ENCODE measurements at regions of chr11 and their contacts with region 1.

Region 1: GRCh38 chr11:86068951-86069407 is at the start of gene PICALM:
- DNase-seq: peak; percentile 85 to 98
- ATAC-seq: peak; percentile 85 to 91
- H3K4me3 ChIP-seq: peak within 1 kb of the TSS; percentile 81
- H3K27ac ChIP-seq: peak within 1 kb of the TSS; percentile 91 to 98
- H3K4me1 ChIP-seq: peaks cover 35% of the 10 kb centered on the region
- CTCF ChIP-seq: no peak
- EP300 ChIP-seq: no peak
- POLR2A ChIP-seq: peak; percentile 66
- RAD21 ChIP-seq: peak in 1 of 2 experiments; percentile 23; a peak in 1 of 5 replicates
- polyA plus RNA-seq, gene PICALM: 195 and 212 TPM in 2 replicates

Region 2: DNA sequence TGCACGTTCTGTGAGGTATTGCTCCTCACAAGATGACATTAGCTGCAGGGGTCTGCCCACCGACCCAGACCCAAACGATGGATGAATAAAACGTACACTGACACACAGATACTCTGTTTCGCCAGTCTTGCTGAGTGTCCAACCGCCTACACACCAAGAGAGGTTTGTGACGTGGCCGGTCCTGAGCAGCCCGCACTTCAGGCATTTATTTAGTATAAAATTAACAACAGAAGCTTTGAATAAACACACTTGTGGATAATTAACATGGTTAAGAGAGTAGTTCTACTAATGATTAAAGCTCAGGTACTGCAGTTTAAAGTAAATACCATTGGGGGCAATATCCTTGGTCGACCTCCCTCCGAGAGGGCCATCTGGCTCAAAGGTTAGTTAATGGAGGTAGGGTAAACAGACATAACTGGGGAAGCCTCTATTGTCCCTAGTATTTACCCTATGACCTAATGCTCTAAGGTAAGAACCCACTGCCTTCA is 138.1 kb before region 1 on chr11:
- CTCF ChIA-PET with region 1: no interaction called
- POLR2A ChIA-PET with region 1: no interaction called
- DNase-seq: no peak
- ATAC-seq: no peak
- H3K4me3 ChIP-seq: no peak overlapping the region
- H3K27ac ChIP-seq: no peak overlapping the region
- H3K4me1 ChIP-seq: no peaks in the 10 kb centered on the region
- CTCF ChIP-seq: no peak
- EP300 ChIP-seq: no peak
- POLR2A ChIP-seq: no peak
- RAD21 ChIP-seq: no peak

Region 3: GRCh38 chr11:86101941-86102407 is 33.0 kb after region 1 on chr11:
- CTCF ChIA-PET with region 1: no interaction called
- POLR2A ChIA-PET with region 1: interaction called, 16 read pairs
- DNase-seq: peak in 1 of 2 experiments; percentile 47
- ATAC-seq: peak; percentile 74 to 87
- H3K4me3 ChIP-seq: no peak overlapping the region
- H3K27ac ChIP-seq: peak overlapping the region in 1 of 2 experiments; percentile 34; a peak in 1 of 6 replicates
- H3K4me1 ChIP-seq: peaks cover 24% of the 10 kb centered on the region
- CTCF ChIP-seq: no peak
- EP300 ChIP-seq: no peak
- POLR2A ChIP-seq: no peak
- RAD21 ChIP-seq: no peak

Region 4: DNA sequence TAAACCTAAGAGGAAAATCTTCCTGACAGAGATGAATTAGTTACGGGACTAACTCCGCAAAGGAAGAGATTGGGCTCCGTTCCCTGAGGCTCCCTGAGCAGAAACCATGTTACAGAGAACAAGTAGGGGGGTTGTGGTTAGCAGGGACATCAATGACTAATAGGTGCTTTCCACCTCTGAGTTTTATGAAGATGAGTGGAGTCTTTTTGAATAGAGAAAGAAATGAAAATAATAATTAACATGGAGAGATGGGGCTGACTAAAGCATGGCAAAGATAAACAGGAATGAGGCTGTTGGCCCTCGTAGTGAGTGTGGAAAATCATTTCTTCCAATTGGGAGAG is 47.4 kb after region 1 on chr11:
- CTCF ChIA-PET with region 1: interaction called, 3 read pairs
- POLR2A ChIA-PET with region 1: interaction called, 14 read pairs
- DNase-seq: peak; percentile 52 to 69
- ATAC-seq: peak; percentile 79 to 89
- H3K4me3 ChIP-seq: 0 out of 3 replicates have a peak overlapping the region, but pooled peaks have one; percentile 2
- H3K27ac ChIP-seq: peak overlapping the region; percentile 58 to 85
- H3K4me1 ChIP-seq: peaks cover 37% of the 10 kb centered on the region
- CTCF ChIP-seq: no peak
- EP300 ChIP-seq: no peak
- POLR2A ChIP-seq: no peak
- RAD21 ChIP-seq: no peak

Region 5: DNA sequence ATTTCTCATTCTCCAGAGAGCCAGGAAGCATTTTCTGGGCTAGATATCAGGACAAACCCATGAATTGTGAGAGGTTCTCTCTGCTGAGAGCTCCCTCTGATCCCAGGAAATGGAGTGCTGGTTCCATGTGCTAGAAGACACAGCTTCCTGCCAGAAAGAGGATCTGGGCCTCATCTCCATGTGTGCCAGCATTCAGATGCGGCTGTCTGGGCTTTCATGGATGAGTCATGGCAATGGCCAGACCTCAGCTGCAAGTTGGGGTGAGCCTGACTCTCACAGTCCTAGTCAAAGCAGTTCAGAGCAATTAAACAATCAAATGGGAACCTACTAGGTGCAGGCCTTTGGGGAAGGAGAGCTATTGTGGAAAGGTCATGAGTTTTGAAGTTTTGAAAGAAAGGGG is 93.3 kb after region 1 on chr11:
- CTCF ChIA-PET with region 1: interaction called, 17 read pairs
- POLR2A ChIA-PET with region 1: interaction called, 21 read pairs
- DNase-seq: peak in 1 of 2 experiments; percentile 29
- ATAC-seq: peak in 1 of 2 experiments; percentile 52; a peak in 2 of 6 replicates
- H3K4me3 ChIP-seq: no peak overlapping the region
- H3K27ac ChIP-seq: peak overlapping the region; percentile 61 to 75
- H3K4me1 ChIP-seq: peaks cover 39% of the 10 kb centered on the region
- CTCF ChIP-seq: no peak
- EP300 ChIP-seq: no peak
- POLR2A ChIP-seq: no peak
- RAD21 ChIP-seq: no peak

Measured in A549 (cell line).